Posterior vena cava (tissue), 2 donors: ENCODE measurements at regions of chr2 and their contacts with region 1.

Region 1: GRCh38 chr2:64622443-64623241 is 31.1 kb downstream of the SERTAD2 start:
- DNase-seq: no peak

Region 2: GRCh38 chr2:64859312-64860212 is 236.9 kb after region 1 on chr2:
- intact Hi-C with region 1: loop called in 1 of 2 experiments (anchors 10 kb)
- DNase-seq: peak; percentile 95

Region 3: GRCh38 chr2:65789923-65790675 is 1167.5 kb after region 1 on chr2:
- intact Hi-C with region 1: loop called in 1 of 2 experiments (anchors 5 kb)
- DNase-seq: no peak